Activated CD4-positive, alpha-beta T cell treated with anti-CD3 and anti-CD28 coated beads, Interleukin-2, amount 10 ng/mL, durations not matched to agents 24 days and 14 days (primary cell): ENCODE measurements at regions of chr21 and their contacts with region 1.

Region 1: DNA sequence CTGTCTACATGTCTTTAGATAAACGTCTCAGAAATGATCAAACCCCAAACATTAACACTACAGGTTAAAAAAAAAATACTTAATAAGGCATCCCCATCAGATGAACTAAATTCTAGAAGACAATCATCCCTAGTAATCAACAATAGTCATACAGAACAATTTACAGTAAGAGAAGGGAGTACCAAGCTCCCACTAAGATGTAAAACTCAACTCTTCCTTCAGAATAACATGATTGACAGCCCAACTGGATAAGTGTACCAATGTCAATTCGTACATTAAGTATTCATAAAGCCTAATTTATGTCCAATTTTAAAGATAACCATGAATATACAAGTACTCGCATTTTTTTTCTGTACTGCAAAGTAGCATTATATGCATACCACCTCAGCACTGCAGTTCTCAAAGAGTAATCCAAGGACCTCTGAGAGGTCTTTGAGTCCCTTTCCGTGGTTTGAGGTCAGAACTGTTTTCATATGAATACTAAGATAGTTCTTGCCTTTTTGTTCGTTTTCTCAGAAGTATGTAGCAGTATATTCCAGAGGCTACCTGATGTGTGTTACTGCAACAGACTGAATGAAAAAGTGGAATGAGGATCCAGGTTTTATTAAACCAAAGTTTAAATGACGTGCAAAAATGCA is 6.6 kb downstream of the SCAF4 start:
- DNase-seq: no peak
- H3K4me3 Mint-ChIP-seq: peak overlapping the region; percentile 8
- H3K27ac Mint-ChIP-seq: peak overlapping the region; percentile 69
- H3K4me1 Mint-ChIP-seq: peaks cover 27% of the 10 kb centered on the region
- H3K27me3 Mint-ChIP-seq: no peaks in the 10 kb centered on the region

Region 2: DNA sequence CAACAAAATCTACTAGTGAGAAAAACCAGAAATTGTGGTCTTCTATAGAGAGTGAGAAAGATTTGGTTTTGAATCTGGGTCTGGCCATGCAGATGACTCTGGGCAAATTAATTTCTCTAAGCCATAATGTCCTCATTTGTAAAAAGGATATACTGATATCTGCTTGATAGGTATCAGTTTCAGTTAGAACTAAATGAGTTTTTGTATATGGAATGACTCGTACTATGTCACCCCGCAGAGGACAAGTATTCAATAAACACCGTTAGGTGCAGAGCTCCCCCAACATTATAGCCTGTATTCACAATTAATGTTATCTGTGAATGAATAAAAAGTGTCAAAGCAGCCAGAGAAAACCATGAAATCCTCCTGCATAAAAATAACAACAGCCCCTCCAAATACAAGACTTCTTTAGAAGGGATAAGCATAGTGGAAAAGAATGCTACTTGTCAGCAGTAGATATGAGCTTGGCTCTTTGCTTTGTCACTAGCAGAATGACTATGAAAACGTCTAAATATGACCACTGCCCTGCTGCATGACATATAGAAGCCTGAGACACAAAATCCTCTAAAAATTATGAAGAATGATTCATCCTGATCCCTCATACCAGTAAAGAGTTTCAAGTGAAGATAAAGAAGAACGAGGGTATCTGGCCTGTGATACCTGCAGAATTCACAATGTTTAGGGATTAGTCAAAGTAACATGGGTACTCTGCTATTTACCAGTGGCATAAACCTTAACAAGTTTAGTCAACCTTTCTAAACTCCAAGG is 11.2 kb before region 1 on chr21:
- intact Hi-C with region 1: loop called (anchors 1 kb)
- DNase-seq: no peak
- H3K4me3 Mint-ChIP-seq: peak overlapping the region; percentile 7
- H3K27ac Mint-ChIP-seq: peak overlapping the region; percentile 70
- H3K4me1 Mint-ChIP-seq: peaks cover 24% of the 10 kb centered on the region
- H3K27me3 Mint-ChIP-seq: no peaks in the 10 kb centered on the region